ENCODE measurements at regions of chr1 and their contacts with region 1.

Region 1: DNA sequence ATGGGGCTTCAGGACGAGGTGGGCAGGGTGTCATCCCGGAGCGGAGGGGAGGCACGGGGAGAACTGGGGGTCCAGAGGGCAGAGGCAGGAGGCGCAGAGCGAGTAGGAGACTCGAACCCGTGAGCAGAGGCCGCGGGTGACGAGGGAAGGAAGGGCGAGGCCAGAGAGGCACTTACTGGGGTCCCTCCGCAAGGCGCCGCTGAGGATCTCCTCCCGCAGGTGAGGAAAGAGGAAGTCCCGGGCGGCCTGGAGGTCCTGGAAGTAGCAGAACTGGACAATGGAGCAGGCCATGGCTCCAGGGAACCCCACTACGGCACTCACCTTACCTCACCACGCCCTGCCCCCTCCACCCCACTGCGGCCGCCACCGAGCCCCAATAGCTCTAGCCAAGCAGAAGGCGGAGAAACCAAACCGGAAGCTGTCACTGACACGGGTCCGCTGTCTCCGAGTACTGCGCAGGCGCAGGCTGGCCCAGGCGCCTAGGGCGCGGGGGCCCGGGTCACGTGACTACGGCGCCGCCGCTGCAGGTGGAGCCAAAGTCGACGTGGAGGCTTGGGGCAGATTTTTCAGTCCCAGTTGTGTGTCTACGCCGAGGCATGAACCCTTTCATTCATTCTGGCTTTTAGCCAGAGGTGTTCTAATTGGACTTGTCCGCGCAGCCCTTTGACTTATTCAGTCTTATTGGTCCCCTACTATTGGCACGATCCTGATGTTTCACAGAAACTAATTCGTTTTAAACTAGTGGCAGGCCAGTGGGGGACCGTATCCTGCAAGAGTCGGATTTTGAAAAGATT is at the start of gene RAB3GAP2:
- DNase-seq: peak; percentile 95 to 98 (median 97)
- ATAC-seq: peak; percentile 96
- H3K4me3 ChIP-seq: peak within 1 kb of the TSS; percentile 95
- H3K4me3 Mint-ChIP-seq: no peak within 1 kb of the TSS
- H3K27ac ChIP-seq: peak within 1 kb of the TSS; percentile 98
- H3K27ac Mint-ChIP-seq: no peak within 1 kb of the TSS
- H3K4me1 ChIP-seq: peaks cover 21 to 24% of the 10 kb centered on the region in 2 donors
- H3K4me1 Mint-ChIP-seq: peaks cover 7 to 19% (median 16%) of the 10 kb centered on the region in 7 donors
- H3K27me3 ChIP-seq: no peaks in the 10 kb centered on the region
- H3K27me3 Mint-ChIP-seq: peaks cover 0 to 16% (median 3%) of the 10 kb centered on the region in 5 donors
- total RNA-seq, gene RAB3GAP2: 36.8 to 53.0 (median 46.4) TPM

Region 2: DNA sequence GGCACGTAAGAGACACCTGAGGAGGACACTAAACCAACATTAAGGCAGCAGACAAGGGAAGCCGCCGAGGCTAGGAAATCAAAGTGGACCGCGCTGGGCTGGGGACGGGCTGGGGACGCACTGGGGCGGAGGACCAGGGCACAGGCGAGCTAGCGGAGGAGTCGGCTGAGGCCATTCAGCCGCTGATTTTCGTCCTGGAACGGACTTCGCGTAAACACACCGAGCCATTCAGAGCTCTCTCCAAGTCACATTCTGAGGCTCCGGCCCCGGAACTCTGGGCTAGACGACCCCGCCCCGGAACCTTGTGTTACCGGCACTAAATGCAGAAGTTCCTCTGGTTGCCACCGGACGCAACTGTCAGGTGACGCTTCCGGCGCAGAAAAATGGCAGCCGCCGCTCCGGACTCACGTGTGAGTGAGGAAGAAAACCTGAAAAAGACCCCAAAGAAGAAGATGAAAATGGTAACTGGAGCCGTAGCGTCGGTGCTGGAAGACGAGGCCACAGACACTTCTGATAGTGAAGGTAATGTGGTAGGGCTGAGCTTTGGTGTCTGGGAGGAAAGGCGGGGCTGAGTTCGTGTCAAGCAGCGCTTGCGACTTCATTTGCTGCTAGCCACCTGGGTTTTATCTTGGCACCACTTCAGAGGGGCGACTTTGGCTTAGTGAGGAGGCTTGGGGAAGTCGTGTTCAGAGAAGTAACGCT is 1987.2 kb before region 1 on chr1 and contains the start of gene RRP15:
- CTCF ChIA-PET with region 1: no interaction called
- POLR2A ChIA-PET with region 1: no interaction called
- intact Hi-C with region 1: loop called in 1 of 2 experiments (anchors 1 kb)
- DNase-seq: peak; percentile 75 to 85 (median 82)
- ATAC-seq: peak; percentile 97
- H3K4me3 ChIP-seq: peak within 1 kb of the TSS; percentile 78
- H3K4me3 Mint-ChIP-seq: peak within 1 kb of the TSS; percentile 87 to 100 (median 98)
- H3K27ac ChIP-seq: peak within 1 kb of the TSS; percentile 77
- H3K27ac Mint-ChIP-seq: peak within 1 kb of the TSS; percentile 89 to 99 (median 95)
- H3K4me1 ChIP-seq: peaks cover 11 to 16% of the 10 kb centered on the region in 2 donors
- H3K4me1 Mint-ChIP-seq: peaks cover 19 to 55% (median 42%) of the 10 kb centered on the region in 7 donors
- H3K27me3 ChIP-seq: no peaks in the 10 kb centered on the region
- H3K27me3 Mint-ChIP-seq: peaks cover 3 to 20% (median 12%) of the 10 kb centered on the region in 5 donors
- total RNA-seq, gene RRP15: 12.8 to 19.0 (median 17.7) TPM

Region 3: GRCh38 chr1:220046052-220046930 is 226.0 kb before region 1 on chr1 and contains the start of gene EPRS1:
- CTCF ChIA-PET with region 1: no interaction called
- POLR2A ChIA-PET with region 1: no interaction called
- intact Hi-C with region 1: loop called (anchors 1 kb)
- DNase-seq: peak; percentile 83 to 97 (median 95)
- ATAC-seq: peak; percentile 99
- H3K4me3 ChIP-seq: peak within 1 kb of the TSS; percentile 92
- H3K4me3 Mint-ChIP-seq: peak within 1 kb of the TSS; percentile 88 to 99 (median 93)
- H3K27ac ChIP-seq: peak within 1 kb of the TSS; percentile 86
- H3K27ac Mint-ChIP-seq: peak within 1 kb of the TSS; percentile 80 to 99 (median 94)
- H3K4me1 ChIP-seq: peaks cover 0 to 23% of the 10 kb centered on the region in 2 donors
- H3K4me1 Mint-ChIP-seq: peaks cover 8 to 48% (median 34%) of the 10 kb centered on the region in 7 donors
- H3K27me3 ChIP-seq: no peaks in the 10 kb centered on the region
- H3K27me3 Mint-ChIP-seq: peaks cover 0 to 3% (median 0%) of the 10 kb centered on the region in 5 donors
- total RNA-seq, gene EPRS1: 39.2 to 130 (median 93.6) TPM

Region 4: GRCh38 chr1:220217383-220217988 is 54.8 kb before region 1 on chr1:
- CTCF ChIA-PET with region 1: interaction called, 3 read pairs
- POLR2A ChIA-PET with region 1: no interaction called
- intact Hi-C with region 1: loop called (anchors 5 kb)
- DNase-seq: no peak
- ATAC-seq: no peak
- H3K4me3 ChIP-seq: no peak overlapping the region
- H3K4me3 Mint-ChIP-seq: peak overlapping the region in 1 of 10 donors; percentile 33
- H3K27ac ChIP-seq: no peak overlapping the region
- H3K27ac Mint-ChIP-seq: peak overlapping the region in 2 of 9 donors; percentile 28 to 52
- H3K4me1 ChIP-seq: no peaks in the 10 kb centered on the region
- H3K4me1 Mint-ChIP-seq: peaks cover 3 to 37% (median 25%) of the 10 kb centered on the region in 7 donors
- H3K27me3 ChIP-seq: no peaks in the 10 kb centered on the region
- H3K27me3 Mint-ChIP-seq: no peaks in the 10 kb centered on the region

Region 5: DNA sequence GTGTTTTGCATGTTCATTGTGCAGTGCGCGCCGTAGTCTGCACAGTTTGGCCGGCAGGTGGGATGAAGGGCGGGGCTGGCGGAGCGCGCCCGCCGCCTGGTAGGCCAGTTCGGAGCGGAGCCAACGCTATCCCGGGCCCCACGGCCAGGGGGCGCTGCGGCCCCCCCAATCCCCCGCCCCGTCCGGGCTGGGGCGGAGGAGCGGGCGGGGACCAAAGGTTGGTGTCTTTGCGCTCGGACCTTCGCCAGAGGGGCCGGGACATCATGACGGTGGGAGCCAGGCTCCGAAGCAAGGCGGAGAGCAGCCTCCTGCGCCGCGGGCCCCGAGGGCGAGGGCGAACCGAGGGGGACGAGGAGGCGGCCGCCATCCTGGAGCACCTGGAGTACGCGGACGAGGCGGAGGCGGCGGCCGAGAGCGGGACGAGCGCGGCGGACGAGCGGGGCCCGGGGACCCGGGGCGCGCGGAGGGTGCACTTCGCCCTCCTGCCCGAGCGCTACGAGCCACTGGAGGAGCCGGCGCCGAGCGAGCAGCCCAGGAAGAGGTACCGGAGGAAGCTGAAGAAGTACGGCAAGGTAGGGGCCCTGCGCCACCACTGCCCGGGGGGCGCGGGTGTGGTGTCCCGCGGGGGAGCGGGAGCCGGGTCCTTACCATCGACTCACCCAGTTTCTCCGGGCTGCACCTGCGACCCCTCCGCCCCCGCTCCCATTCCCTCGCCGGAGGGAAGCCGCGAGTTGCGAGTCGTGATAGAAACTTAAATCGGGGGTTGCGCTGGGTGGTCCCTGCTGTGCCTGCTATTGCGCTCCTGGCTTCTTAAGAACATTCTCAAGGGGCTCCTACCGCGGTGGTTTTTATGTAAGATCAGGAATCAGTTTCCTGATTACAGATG is 418.1 kb after region 1 on chr1 and contains the start of gene C1orf115:
- CTCF ChIA-PET with region 1: no interaction called
- POLR2A ChIA-PET with region 1: no interaction called
- intact Hi-C with region 1: loop called in 1 of 2 experiments (anchors 1 kb)
- DNase-seq: peak; percentile 57 to 81 (median 71)
- ATAC-seq: peak; percentile 99
- H3K4me3 ChIP-seq: peak within 1 kb of the TSS; percentile 58
- H3K4me3 Mint-ChIP-seq: peak within 1 kb of the TSS; percentile 71 to 89 (median 86)
- H3K27ac ChIP-seq: peak within 1 kb of the TSS; percentile 43
- H3K27ac Mint-ChIP-seq: peak within 1 kb of the TSS in 3 of 9 donors; percentile 22 to 52 (median 32)
- H3K4me1 ChIP-seq: peaks cover 5 to 8% of the 10 kb centered on the region in 2 donors
- H3K4me1 Mint-ChIP-seq: peaks cover 5 to 14% (median 7%) of the 10 kb centered on the region in 7 donors
- H3K27me3 ChIP-seq: no peaks in the 10 kb centered on the region
- H3K27me3 Mint-ChIP-seq: peaks cover 5 to 32% (median 11%) of the 10 kb centered on the region in 5 donors
- total RNA-seq, gene C1orf115: 0.17 to 2.1 (median 1.5) TPM

Measured in naive thymus-derived CD4-positive, alpha-beta T cell (primary cell).